Activated CD8-positive, alpha-beta T cell treated with anti-CD3 and anti-CD28 coated beads for 36 hours (primary cell): ENCODE measurements at regions of chr11 and their contacts with region 1.

Region 1: GRCh38 chr11:18802381-18803257 is 11.0 kb upstream of the PTPN5 start:
- DNase-seq: peak; percentile 66
- ATAC-seq: peak; percentile 34
- H3K4me3 Mint-ChIP-seq: no peak overlapping the region
- H3K27ac Mint-ChIP-seq: no peak overlapping the region
- H3K4me1 Mint-ChIP-seq: no peaks in the 10 kb centered on the region
- H3K27me3 Mint-ChIP-seq: peaks cover 12% of the 10 kb centered on the region
- CTCF ChIP-seq: peak; percentile 59

Region 2: DNA sequence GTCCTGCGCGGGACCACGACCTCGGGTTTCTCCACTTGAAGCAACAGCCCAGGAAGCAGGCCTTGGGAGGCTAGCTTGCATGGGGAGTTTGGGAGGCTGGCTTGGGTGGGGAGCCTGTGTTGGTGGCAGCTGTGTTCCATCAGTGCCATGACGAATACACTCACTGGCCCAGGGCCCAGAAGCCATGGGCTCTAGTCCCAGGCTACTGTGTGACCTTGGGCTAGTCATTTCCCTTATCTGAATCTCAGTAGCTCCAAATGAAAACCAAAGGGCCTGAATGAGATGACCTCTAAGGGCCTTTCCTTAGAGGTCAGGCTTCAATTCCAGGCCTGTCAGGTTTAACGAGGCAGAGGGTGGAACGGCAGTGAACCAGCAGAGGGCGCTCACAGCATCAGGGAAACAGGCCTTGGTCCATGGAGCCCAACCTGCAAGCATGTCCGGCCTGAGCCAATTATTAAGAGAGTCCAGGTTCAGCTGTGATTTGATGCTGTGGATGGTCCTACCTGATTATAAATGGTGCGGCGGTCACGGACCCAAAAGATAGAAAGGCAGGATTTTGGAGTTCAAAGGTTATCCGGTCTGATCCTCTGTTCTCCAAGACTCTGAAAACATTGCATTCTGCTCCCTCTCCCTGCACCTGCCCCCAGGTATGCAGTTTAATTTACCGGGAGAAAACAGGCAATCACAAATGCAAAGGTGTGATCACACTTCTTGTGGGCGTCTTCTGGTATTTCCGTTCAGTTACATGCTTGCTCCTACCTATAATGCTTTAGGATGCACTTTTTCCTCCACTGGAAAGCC is 26.9 kb before region 1 on chr11:
- CTCF ChIA-PET with region 1: interaction called, 106 read pairs
- POLR2A ChIA-PET with region 1: no interaction called
- intact Hi-C with region 1: no loop called
- DNase-seq: peak; percentile 89
- ATAC-seq: peak; percentile 74
- H3K4me3 Mint-ChIP-seq: no peak overlapping the region
- H3K27ac Mint-ChIP-seq: no peak overlapping the region
- H3K4me1 Mint-ChIP-seq: peaks cover 8% of the 10 kb centered on the region
- H3K27me3 Mint-ChIP-seq: peaks cover 3% of the 10 kb centered on the region
- CTCF ChIP-seq: peak; percentile 81

Region 3: GRCh38 chr11:19084661-19085315 is 282.2 kb after region 1 on chr11:
- CTCF ChIA-PET with region 1: no interaction called
- POLR2A ChIA-PET with region 1: no interaction called
- intact Hi-C with region 1: no loop called
- DNase-seq: no peak
- ATAC-seq: no peak
- H3K4me3 Mint-ChIP-seq: no peak overlapping the region
- H3K27ac Mint-ChIP-seq: no peak overlapping the region
- H3K4me1 Mint-ChIP-seq: no peaks in the 10 kb centered on the region
- H3K27me3 Mint-ChIP-seq: peaks cover 5% of the 10 kb centered on the region
- CTCF ChIP-seq: no peak

Region 4: GRCh38 chr11:19864141-19865140 is 1061.8 kb after region 1 on chr11:
- CTCF ChIA-PET with region 1: no interaction called
- POLR2A ChIA-PET with region 1: no interaction called
- intact Hi-C with region 1: no loop called
- DNase-seq: no peak
- ATAC-seq: no peak
- H3K4me3 Mint-ChIP-seq: no peak overlapping the region
- H3K27ac Mint-ChIP-seq: no peak overlapping the region
- H3K4me1 Mint-ChIP-seq: no peaks in the 10 kb centered on the region
- H3K27me3 Mint-ChIP-seq: no peaks in the 10 kb centered on the region
- CTCF ChIP-seq: no peak